Endothelial cell of umbilical vein (primary cell): ENCODE measurements at regions of chr11 and their contacts with region 1.

Region 1: GRCh38 chr11:101860696-101861427 is 53.9 kb upstream of the CEP126 start:
- DNase-seq: peak; percentile 58
- H3K4me3 ChIP-seq: no peak overlapping the region
- H3K27ac ChIP-seq: no peak overlapping the region
- H3K4me1 ChIP-seq: peaks cover 31% of the 10 kb centered on the region
- H3K27me3 ChIP-seq: no peaks in the 10 kb centered on the region
- CTCF ChIP-seq: peak; percentile 67 to 76
- POLR2A ChIP-seq: no peak

Region 2: GRCh38 chr11:101807531-101807930 is 53.3 kb before region 1 on chr11:
- CTCF ChIA-PET with region 1: no interaction called
- POLR2A ChIA-PET with region 1: no interaction called
- dilution Hi-C with region 1: no loop called
- intact Hi-C with region 1: no loop called
- DNase-seq: peak; percentile 16
- H3K4me3 ChIP-seq: no peak overlapping the region
- H3K27ac ChIP-seq: no peak overlapping the region
- H3K4me1 ChIP-seq: peaks cover 8% of the 10 kb centered on the region
- H3K27me3 ChIP-seq: no peaks in the 10 kb centered on the region
- CTCF ChIP-seq: no peak
- POLR2A ChIP-seq: no peak

Region 3: DNA sequence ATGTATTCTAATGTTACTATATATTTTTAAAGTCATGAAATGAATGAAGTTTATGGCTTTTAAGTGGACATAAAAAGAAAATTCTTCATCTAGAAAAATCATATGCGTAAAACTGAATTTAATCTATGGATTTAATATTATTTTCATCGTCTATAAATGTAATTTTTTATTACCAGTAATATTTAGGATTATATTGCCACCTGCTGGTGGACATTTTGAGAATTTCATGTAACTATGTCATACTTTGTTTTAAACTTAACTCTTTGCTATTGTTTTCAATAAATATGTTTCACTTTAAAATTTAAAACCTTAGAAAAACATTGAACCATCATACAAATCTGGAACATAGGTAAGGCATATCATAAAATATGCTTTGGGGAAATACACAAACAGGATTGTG is 12.6 kb before region 1 on chr11:
- CTCF ChIA-PET with region 1: interaction called, 12 read pairs
- POLR2A ChIA-PET with region 1: no interaction called
- dilution Hi-C with region 1: no loop called
- intact Hi-C with region 1: no loop called
- DNase-seq: peak; percentile 8
- H3K4me3 ChIP-seq: no peak overlapping the region
- H3K27ac ChIP-seq: no peak overlapping the region
- H3K4me1 ChIP-seq: no peaks in the 10 kb centered on the region
- H3K27me3 ChIP-seq: no peaks in the 10 kb centered on the region
- CTCF ChIP-seq: peak in 1 of 2 donors; percentile 15
- POLR2A ChIP-seq: no peak

Region 4: GRCh38 chr11:101914738-101915426 is 54.0 kb after region 1 on chr11 and contains the start of gene CEP126:
- CTCF ChIA-PET with region 1: interaction called, 43 read pairs
- POLR2A ChIA-PET with region 1: interaction called, 7 read pairs
- dilution Hi-C with region 1: no loop called
- intact Hi-C with region 1: loop called (anchors 1 kb)
- DNase-seq: peak; percentile 99
- H3K4me3 ChIP-seq: peak within 1 kb of the TSS; percentile 13 to 81 (median 73)
- H3K27ac ChIP-seq: peak within 1 kb of the TSS; percentile 100
- H3K4me1 ChIP-seq: peaks cover 42% of the 10 kb centered on the region
- H3K27me3 ChIP-seq: no peaks in the 10 kb centered on the region
- CTCF ChIP-seq: peak; percentile 32 to 59
- POLR2A ChIP-seq: peak; percentile 79
- total RNA-seq, gene CEP126: 5.8 and 9.1 TPM in 2 replicates

Region 5: DNA sequence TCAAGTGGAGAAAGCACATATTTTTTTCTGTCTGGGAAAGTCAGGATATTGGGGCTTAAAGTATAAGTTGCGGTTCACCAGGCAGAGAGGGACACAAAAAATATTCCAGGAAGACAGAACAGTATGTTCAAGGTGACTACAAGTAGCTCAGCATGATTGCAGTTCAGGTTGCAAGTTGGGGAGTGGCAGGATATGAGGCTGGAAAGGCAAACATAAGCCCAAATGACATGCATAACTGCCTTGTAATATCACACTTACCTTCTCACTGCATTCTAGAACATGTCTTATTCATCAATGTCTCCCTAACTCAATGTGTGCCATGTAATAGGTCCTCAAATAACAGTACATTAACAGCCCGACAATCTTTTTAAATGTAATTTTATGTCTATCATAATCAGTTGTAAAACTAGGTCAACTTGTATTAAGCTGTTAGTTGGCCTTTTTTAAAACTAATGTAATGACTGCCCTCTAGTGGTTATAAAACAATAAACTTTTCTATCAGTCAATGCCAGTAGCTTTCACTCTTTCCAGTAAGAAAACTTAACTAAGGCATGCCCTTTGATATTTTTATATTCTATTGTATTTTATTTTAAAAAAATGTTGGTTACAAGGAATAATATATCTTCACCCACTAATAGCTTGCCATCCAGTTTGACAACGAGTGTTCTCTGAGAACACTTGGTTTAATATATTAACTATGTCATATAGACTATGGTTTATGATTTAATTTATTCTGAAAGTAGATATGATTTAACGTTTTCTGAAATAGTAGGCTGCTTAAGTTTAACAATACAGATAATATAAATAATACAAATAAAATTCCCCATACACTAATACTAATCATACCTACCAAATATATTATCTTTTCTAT is 146.9 kb after region 1 on chr11:
- CTCF ChIA-PET with region 1: interaction called, 621 read pairs
- POLR2A ChIA-PET with region 1: interaction called, 10 read pairs
- dilution Hi-C with region 1: no loop called
- intact Hi-C with region 1: loop called (anchors 1 kb)
- DNase-seq: peak; percentile 78
- H3K4me3 ChIP-seq: no peak overlapping the region
- H3K27ac ChIP-seq: no peak overlapping the region
- H3K4me1 ChIP-seq: peaks cover 15% of the 10 kb centered on the region
- H3K27me3 ChIP-seq: no peaks in the 10 kb centered on the region
- CTCF ChIP-seq: peak; percentile 7 to 15
- POLR2A ChIP-seq: peak; percentile 17

Region 6: GRCh38 chr11:102225689-102226568 is 365.1 kb after region 1 on chr11:
- CTCF ChIA-PET with region 1: no interaction called
- POLR2A ChIA-PET with region 1: no interaction called
- dilution Hi-C with region 1: no loop called
- intact Hi-C with region 1: loop called (anchors 10 kb)
- DNase-seq: peak; percentile 87
- H3K4me3 ChIP-seq: no peak overlapping the region
- H3K27ac ChIP-seq: peak overlapping the region; percentile 54
- H3K4me1 ChIP-seq: peaks cover 24% of the 10 kb centered on the region
- H3K27me3 ChIP-seq: no peaks in the 10 kb centered on the region
- CTCF ChIP-seq: no peak
- POLR2A ChIP-seq: peak; percentile 40

Region 7: GRCh38 chr11:102346748-102347461 is 486.0 kb after region 1 on chr11 and contains the start of gene BIRC2:
- CTCF ChIA-PET with region 1: no interaction called
- POLR2A ChIA-PET with region 1: no interaction called
- dilution Hi-C with region 1: no loop called
- intact Hi-C with region 1: loop called (anchors 2 kb)
- DNase-seq: peak; percentile 91
- H3K4me3 ChIP-seq: peak within 1 kb of the TSS; percentile 69 to 99 (median 92)
- H3K27ac ChIP-seq: peak within 1 kb of the TSS; percentile 89
- H3K4me1 ChIP-seq: peaks cover 43% of the 10 kb centered on the region
- H3K27me3 ChIP-seq: no peaks in the 10 kb centered on the region
- CTCF ChIP-seq: peak; percentile 70 to 88
- POLR2A ChIP-seq: peak; percentile 90
- total RNA-seq, gene BIRC2: 47.3 and 49.9 TPM in 2 replicates

Region 8: DNA sequence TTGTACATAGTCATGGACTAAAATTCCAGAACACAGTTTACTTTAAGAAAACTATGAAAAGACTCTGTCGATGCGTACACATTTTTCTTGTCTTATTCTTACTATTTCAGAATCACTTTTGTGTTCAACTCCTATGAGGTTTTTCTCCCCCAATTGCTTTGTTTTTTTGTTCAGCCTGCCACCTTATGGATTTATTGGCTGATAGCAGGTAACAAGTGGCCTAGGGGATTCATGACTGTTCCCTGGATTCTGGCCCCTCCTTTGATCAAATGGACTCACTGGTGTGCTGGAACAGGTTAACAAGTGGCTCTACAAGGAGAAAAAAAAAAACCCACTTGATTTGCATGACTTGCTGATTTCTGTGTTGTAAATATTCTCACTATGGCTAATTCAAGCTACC is 753.6 kb after region 1 on chr11:
- CTCF ChIA-PET with region 1: interaction called, 16 read pairs
- POLR2A ChIA-PET with region 1: no interaction called
- dilution Hi-C with region 1: no loop called
- intact Hi-C with region 1: no loop called
- DNase-seq: no peak
- H3K4me3 ChIP-seq: no peak overlapping the region
- H3K27ac ChIP-seq: no peak overlapping the region
- H3K4me1 ChIP-seq: peaks cover 11% of the 10 kb centered on the region
- H3K27me3 ChIP-seq: no peaks in the 10 kb centered on the region
- CTCF ChIP-seq: no peak
- POLR2A ChIP-seq: no peak